Dendritic cell treated with granulocyte-macrophage colony-stimulating factor and Interleukin-4, amounts not matched to agents 40 ng/mL and 50 ng/mL, for 4 days (primary cell): ENCODE measurements at regions of chr2 and their contacts with region 1.

Region 1: DNA sequence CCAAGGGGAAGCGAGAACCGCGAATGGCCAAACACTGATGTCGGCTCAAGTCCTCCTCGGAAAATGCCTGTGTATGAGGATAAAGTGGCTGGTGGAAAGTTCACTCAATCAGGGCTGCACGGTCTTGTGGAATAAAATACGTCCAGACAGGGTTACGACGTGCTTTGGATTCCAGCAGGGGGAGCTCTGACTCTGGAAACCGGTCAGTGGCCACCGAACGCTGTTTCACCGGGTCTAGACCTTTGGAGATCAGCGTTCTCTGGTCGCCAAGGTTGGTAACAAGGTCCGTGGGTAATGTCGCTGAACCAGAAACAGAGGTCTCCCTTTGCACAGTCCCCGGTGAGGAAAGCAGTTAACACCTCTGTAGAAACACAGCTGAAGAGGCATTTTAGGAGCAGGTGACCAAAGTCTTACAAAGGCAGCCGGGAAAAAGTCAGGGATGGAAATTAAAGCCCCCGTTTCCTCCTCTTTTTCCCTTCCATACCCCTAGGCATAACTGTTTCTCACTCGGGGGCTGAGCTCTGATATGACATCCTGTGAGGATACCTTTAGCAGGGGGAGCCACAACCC is 47.8 kb downstream of the CDCA7 start:
- H3K4me3 Mint-ChIP-seq: peak overlapping the region; percentile 37
- H3K27ac Mint-ChIP-seq: no peak overlapping the region
- H3K4me1 Mint-ChIP-seq: peaks cover 7% of the 10 kb centered on the region
- H3K27me3 Mint-ChIP-seq: peaks cover 70% of the 10 kb centered on the region

Region 2: DNA sequence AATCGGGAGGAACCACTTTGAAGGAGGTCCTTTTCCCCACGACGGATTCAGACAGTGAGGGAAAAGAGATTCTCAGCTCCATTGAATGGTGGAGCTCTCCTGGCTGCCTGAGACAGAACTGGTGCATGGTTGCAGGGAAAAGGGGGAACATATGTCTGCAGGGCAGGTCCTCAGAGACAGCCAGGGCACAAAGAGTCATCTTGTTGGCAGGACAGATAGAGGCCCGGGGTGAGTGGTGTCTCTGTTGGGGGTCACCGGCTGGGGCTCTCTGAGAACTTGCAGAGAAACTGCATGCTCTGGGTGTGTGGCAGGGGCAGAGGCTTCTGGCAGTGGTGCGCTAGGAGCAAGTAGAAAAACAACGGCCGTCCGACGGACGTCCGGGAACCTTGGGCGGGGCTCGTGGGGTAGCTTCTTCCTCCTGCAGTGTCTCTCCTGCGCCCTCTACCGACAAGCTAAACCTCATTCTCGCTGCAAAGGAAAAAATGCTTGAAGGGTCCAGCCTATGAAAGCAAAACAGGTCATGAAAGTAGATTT is 46.5 kb after region 1 on chr2:
- intact Hi-C with region 1: loop called (anchors 1 kb)
- H3K4me3 Mint-ChIP-seq: peak overlapping the region; percentile 66
- H3K27ac Mint-ChIP-seq: no peak overlapping the region
- H3K4me1 Mint-ChIP-seq: peaks cover 6% of the 10 kb centered on the region
- H3K27me3 Mint-ChIP-seq: peaks cover 11% of the 10 kb centered on the region

Region 3: GRCh38 chr2:173571021-173571882 is 168.8 kb after region 1 on chr2:
- intact Hi-C with region 1: loop called (anchors 2 kb)
- H3K4me3 Mint-ChIP-seq: no peak overlapping the region
- H3K27ac Mint-ChIP-seq: no peak overlapping the region
- H3K4me1 Mint-ChIP-seq: peaks cover 5% of the 10 kb centered on the region
- H3K27me3 Mint-ChIP-seq: peaks cover 15% of the 10 kb centered on the region

Region 4: GRCh38 chr2:174080672-174081121 is 678.2 kb after region 1 on chr2:
- intact Hi-C with region 1: loop called (anchors 10 kb)
- H3K4me3 Mint-ChIP-seq: no peak overlapping the region
- H3K27ac Mint-ChIP-seq: no peak overlapping the region
- H3K4me1 Mint-ChIP-seq: no peaks in the 10 kb centered on the region
- H3K27me3 Mint-ChIP-seq: no peaks in the 10 kb centered on the region